Activated B cell treated with CpG ODN at 0.5 μM for 24 hours (primary cell): ENCODE measurements at regions of chr7 and their contacts with region 1.

Region 1: DNA sequence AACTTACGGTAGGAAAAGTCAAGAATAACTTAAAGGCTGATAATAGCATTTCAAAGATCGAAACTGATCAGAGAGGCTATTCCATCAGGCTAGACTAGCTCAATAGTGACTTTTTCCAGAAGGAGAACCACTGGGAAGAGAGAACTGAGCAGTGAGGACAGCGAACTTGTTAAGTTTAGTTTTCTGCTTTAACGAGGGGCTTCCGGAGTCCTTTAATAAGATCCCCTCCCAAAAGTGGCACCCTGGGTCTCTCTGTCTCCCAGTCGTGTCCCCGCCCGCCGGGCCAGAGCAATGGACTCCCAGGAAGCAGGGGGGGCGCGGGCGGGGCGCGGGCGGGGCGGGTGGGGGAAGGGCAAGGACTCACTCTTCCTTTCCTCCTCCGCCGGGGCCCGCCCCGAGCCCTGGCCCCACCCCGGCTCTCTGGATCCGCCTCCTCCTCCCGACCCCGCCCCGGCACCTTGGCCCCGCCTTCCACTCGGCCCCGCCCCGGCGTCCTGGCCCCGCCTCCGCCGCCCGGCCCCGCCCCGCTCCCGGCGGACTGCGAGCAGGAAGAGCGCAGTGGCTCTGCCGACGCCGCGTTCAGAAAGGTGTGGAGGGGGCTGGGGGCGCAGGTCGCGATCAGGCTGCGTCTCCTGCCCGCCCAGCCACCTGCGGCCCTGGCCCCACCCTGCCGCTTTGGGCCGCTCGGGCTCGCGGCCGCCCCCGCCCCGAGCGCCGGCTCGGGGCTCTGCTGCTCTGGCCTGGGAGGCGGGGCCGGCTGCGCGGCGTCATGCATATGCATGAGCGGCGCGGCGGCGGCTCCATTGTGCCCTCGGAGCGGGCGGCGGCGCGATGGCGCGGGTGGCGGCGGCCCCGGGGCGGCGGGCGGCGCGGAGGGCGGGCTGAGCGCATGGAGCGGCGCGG is at the start of gene ZMIZ2:
- DNase-seq: peak; percentile 97
- ATAC-seq: peak; percentile 78
- H3K4me3 Mint-ChIP-seq: peak within 1 kb of the TSS; percentile 91
- H3K27ac Mint-ChIP-seq: peak within 1 kb of the TSS; percentile 95
- H3K4me1 Mint-ChIP-seq: peaks cover 48% of the 10 kb centered on the region
- H3K27me3 Mint-ChIP-seq: no peaks in the 10 kb centered on the region
- CTCF ChIP-seq: no peak
- total RNA-seq, gene ZMIZ2: 378 and 440 TPM in 2 replicates

Region 2: DNA sequence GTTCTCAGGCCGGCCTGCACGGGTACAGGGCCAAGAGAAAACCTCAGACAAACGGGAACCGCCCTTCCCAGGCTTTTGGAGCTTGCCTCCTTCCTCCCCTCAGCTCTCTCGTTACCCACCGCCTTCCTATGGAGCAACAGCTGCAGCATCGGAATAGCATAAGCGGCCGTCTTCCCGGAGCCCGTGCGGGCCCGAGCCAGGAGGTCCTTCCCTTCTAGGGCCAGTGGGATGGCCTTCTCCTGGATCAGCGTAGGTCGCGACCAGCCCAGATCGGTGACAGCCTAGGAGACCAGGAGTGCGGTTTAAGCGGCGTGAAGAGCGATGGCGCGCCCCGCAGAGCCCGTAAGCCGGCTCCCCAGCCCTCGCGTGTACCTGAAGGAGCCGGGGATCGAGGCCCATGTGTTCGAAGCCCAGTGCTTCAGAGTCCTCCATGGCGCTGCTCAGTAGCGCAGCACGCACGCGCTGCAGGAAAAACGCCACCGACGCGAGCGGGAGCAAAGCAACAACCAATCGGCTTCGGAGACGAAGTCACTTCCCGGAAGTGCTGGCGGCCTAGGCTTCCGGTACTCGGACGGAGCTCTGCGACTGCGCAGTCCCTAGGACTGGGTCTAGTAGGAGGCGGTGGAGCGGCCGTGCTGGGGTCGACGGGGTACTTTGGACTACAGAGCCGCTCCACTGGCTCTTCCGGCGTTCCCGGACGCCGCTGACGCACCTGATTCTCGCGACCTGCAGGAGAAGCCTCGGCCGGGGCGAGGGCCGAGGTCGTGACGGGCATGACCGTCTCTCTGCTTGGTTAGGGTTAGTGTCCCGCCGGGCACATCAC is 174.6 kb before region 1 on chr7 and contains the start of gene DDX56:
- CTCF ChIA-PET with region 1: no interaction called
- POLR2A ChIA-PET with region 1: interaction called, 10 read pairs
- intact Hi-C with region 1: no loop called
- DNase-seq: peak; percentile 82
- ATAC-seq: peak; percentile 97
- H3K4me3 Mint-ChIP-seq: peak within 1 kb of the TSS; percentile 94
- H3K27ac Mint-ChIP-seq: peak within 1 kb of the TSS; percentile 94
- H3K4me1 Mint-ChIP-seq: peaks cover 35% of the 10 kb centered on the region
- H3K27me3 Mint-ChIP-seq: no peaks in the 10 kb centered on the region
- CTCF ChIP-seq: no peak
- total RNA-seq, gene DDX56: 92.6 and 99.7 TPM in 2 replicates

Region 3: GRCh38 chr7:44587843-44588711 is 160.2 kb before region 1 on chr7:
- CTCF ChIA-PET with region 1: interaction called, 3 read pairs
- POLR2A ChIA-PET with region 1: interaction called, 27 read pairs
- intact Hi-C with region 1: loop called (anchors 1 kb)
- DNase-seq: no peak
- ATAC-seq: peak; percentile 79
- H3K4me3 Mint-ChIP-seq: no peak overlapping the region
- H3K27ac Mint-ChIP-seq: no peak overlapping the region
- H3K4me1 Mint-ChIP-seq: peaks cover 6% of the 10 kb centered on the region
- H3K27me3 Mint-ChIP-seq: peaks cover 3% of the 10 kb centered on the region
- CTCF ChIP-seq: no peak

Region 4: GRCh38 chr7:44633254-44634186 is 114.8 kb before region 1 on chr7:
- CTCF ChIA-PET with region 1: interaction called, 13 read pairs
- POLR2A ChIA-PET with region 1: interaction called, 138 read pairs
- intact Hi-C with region 1: loop called (anchors 1 kb)
- DNase-seq: peak; percentile 32
- ATAC-seq: peak; percentile 67
- H3K4me3 Mint-ChIP-seq: peak overlapping the region; percentile 61
- H3K27ac Mint-ChIP-seq: peak overlapping the region; percentile 96
- H3K4me1 Mint-ChIP-seq: peaks cover 96% of the 10 kb centered on the region
- H3K27me3 Mint-ChIP-seq: no peaks in the 10 kb centered on the region
- CTCF ChIP-seq: no peak

Region 5: GRCh38 chr7:44685723-44686122 is 62.6 kb before region 1 on chr7:
- CTCF ChIA-PET with region 1: no interaction called
- POLR2A ChIA-PET with region 1: no interaction called
- intact Hi-C with region 1: loop called (anchors 5 kb)
- DNase-seq: no peak
- ATAC-seq: no peak
- H3K4me3 Mint-ChIP-seq: no peak overlapping the region
- H3K27ac Mint-ChIP-seq: no peak overlapping the region
- H3K4me1 Mint-ChIP-seq: no peaks in the 10 kb centered on the region
- H3K27me3 Mint-ChIP-seq: no peaks in the 10 kb centered on the region
- CTCF ChIP-seq: no peak

Region 6: GRCh38 chr7:44735403-44736165 is 12.7 kb before region 1 on chr7:
- CTCF ChIA-PET with region 1: interaction called, 4 read pairs
- POLR2A ChIA-PET with region 1: interaction called, 15 read pairs
- intact Hi-C with region 1: loop called (anchors 1 kb)
- DNase-seq: no peak
- ATAC-seq: peak; percentile 77
- H3K4me3 Mint-ChIP-seq: peak overlapping the region; percentile 47
- H3K27ac Mint-ChIP-seq: peak overlapping the region; percentile 71
- H3K4me1 Mint-ChIP-seq: peaks cover 15% of the 10 kb centered on the region
- H3K27me3 Mint-ChIP-seq: no peaks in the 10 kb centered on the region
- CTCF ChIP-seq: no peak

Region 7: GRCh38 chr7:44980393-44981034 is 232.2 kb after region 1 on chr7:
- CTCF ChIA-PET with region 1: no interaction called
- POLR2A ChIA-PET with region 1: interaction called, 4 read pairs
- intact Hi-C with region 1: loop called (anchors 1 kb)
- DNase-seq: peak; percentile 56
- ATAC-seq: peak; percentile 63
- H3K4me3 Mint-ChIP-seq: peak overlapping the region; percentile 74
- H3K27ac Mint-ChIP-seq: peak overlapping the region; percentile 92
- H3K4me1 Mint-ChIP-seq: peaks cover 86% of the 10 kb centered on the region
- H3K27me3 Mint-ChIP-seq: no peaks in the 10 kb centered on the region
- CTCF ChIP-seq: no peak